Activated CD8-positive, alpha-beta T cell treated with anti-CD3 and anti-CD28 coated beads, Interleukin-2, amount 10 ng/mL, durations not matched to agents 7 days and 5 days (primary cell): ENCODE measurements at regions of chr6 and their contacts with region 1.

Region 1: DNA sequence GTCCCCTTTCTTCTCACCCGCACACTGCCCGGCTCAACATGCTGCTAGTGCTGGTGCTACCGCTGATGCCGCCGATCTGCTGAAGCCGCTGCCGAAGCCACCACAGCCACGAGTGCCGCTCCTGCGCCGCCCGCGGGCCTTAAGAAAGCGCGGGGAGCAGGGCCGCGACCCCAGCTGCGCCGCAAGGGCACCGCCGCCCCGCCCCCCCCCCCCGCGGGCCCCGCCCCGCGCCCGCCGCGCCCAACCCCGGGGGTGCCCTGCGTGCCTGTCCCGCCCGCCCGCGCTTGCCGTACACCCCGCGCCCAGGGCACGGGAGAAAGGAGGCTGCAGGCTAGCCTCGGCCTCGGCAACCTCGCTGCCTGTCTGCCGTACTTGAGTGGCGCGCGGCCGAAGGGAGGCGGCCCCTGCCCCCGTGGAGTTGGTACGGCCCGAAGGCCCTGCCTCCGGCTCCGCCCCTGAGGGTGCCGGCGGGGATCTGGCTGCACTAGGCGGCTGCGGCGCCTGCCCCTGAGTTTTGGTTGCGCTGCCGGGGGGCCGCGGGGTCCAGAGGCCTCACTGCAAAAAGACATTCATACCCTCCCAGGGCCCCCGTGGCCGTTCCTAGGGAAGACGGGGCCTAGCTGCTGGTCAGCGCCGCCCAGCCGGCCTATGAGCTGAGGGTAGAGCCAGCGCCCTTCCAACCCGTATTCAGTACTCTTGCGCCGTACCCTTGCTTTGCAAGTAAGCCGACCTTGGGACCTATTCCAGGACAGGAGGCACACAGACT is at the start of gene SOD2:
- DNase-seq: peak; percentile 85
- ATAC-seq: peak; percentile 81
- H3K4me3 Mint-ChIP-seq: peak within 1 kb of the TSS; percentile 94
- H3K27ac Mint-ChIP-seq: peak within 1 kb of the TSS; percentile 95
- H3K4me1 Mint-ChIP-seq: peaks cover 37% of the 10 kb centered on the region
- H3K27me3 Mint-ChIP-seq: no peaks in the 10 kb centered on the region
- total RNA-seq, gene SOD2: 59.1 to 66.4 TPM

Region 2: GRCh38 chr6:159665868-159666635 is 27.3 kb before region 1 on chr6:
- CTCF ChIA-PET with region 1: no interaction called
- POLR2A ChIA-PET with region 1: no interaction called
- DNase-seq: no peak
- ATAC-seq: no peak
- H3K4me3 Mint-ChIP-seq: no peak overlapping the region
- H3K27ac Mint-ChIP-seq: no peak overlapping the region
- H3K4me1 Mint-ChIP-seq: no peaks in the 10 kb centered on the region
- H3K27me3 Mint-ChIP-seq: no peaks in the 10 kb centered on the region

Region 3: DNA sequence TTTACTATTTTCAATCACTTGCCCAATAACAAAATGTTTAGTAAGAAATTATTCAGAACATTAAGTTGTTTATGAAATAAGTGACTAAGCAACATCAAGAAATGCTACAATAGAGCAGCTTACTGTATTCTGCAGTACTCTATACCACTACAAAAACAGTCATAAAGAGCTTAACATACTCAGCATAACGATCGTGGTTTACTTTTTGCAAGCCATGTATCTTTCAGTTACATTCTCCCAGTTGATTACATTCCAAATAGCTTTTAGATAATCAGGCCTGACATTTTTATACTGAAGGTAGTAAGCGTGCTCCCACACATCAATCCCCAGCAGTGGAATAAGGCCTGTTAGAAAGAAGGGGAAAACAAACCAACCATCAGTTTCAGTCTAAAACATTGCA is 11.0 kb before region 1 on chr6:
- CTCF ChIA-PET with region 1: interaction called, 10 read pairs
- POLR2A ChIA-PET with region 1: interaction called, 6 read pairs
- DNase-seq: no peak
- ATAC-seq: no peak
- H3K4me3 Mint-ChIP-seq: no peak overlapping the region
- H3K27ac Mint-ChIP-seq: no peak overlapping the region
- H3K4me1 Mint-ChIP-seq: peaks cover 19% of the 10 kb centered on the region
- H3K27me3 Mint-ChIP-seq: no peaks in the 10 kb centered on the region

Region 4: GRCh38 chr6:159726918-159727716 is 33.8 kb after region 1 on chr6 and contains the start of gene WTAP:
- CTCF ChIA-PET with region 1: interaction called, 33 read pairs
- POLR2A ChIA-PET with region 1: interaction called, 56 read pairs
- DNase-seq: peak; percentile 98
- ATAC-seq: peak; percentile 82
- H3K4me3 Mint-ChIP-seq: peak within 1 kb of the TSS; percentile 93
- H3K27ac Mint-ChIP-seq: peak within 1 kb of the TSS; percentile 98
- H3K4me1 Mint-ChIP-seq: peaks cover 51% of the 10 kb centered on the region
- H3K27me3 Mint-ChIP-seq: no peaks in the 10 kb centered on the region
- total RNA-seq, gene WTAP: 111 to 113 TPM

Region 5: GRCh38 chr6:159852877-159853276 is 159.6 kb after region 1 on chr6:
- CTCF ChIA-PET with region 1: interaction called, 13 read pairs
- POLR2A ChIA-PET with region 1: no interaction called
- DNase-seq: peak; percentile 44
- ATAC-seq: peak; percentile 57
- H3K4me3 Mint-ChIP-seq: no peak overlapping the region
- H3K27ac Mint-ChIP-seq: no peak overlapping the region
- H3K4me1 Mint-ChIP-seq: peaks cover 3% of the 10 kb centered on the region
- H3K27me3 Mint-ChIP-seq: peaks cover 19% of the 10 kb centered on the region

Region 6: DNA sequence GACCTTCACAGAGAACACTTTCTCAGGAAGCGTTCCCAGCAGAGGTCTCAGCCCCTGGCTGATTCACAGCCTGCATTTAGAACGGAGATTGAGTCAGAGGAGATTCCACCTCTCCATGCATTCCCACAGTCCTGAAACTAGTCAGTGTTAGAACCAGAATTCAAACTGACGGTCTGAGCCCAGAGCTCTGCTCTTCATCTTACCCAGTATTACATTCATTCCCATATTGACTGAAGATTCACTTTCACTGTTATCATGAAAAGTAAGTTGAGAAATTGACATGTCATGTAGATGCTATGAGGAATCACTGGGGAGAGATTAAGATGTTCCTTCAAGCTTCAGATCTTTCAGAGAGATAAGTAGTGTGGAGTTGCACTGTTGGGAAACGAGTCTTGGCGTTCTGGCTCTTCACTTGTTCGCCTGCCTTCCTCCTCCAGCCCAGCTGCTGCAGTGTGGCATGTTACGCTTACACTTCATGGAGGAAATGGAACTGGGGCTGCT is 225.8 kb after region 1 on chr6:
- CTCF ChIA-PET with region 1: no interaction called
- POLR2A ChIA-PET with region 1: no interaction called
- DNase-seq: no peak
- ATAC-seq: no peak
- H3K4me3 Mint-ChIP-seq: no peak overlapping the region
- H3K27ac Mint-ChIP-seq: no peak overlapping the region
- H3K4me1 Mint-ChIP-seq: no peaks in the 10 kb centered on the region
- H3K27me3 Mint-ChIP-seq: peaks cover 9% of the 10 kb centered on the region

Region 7: GRCh38 chr6:159968440-159969203 is 275.3 kb after region 1 on chr6 and contains the start of gene IGF2R:
- CTCF ChIA-PET with region 1: no interaction called
- POLR2A ChIA-PET with region 1: no interaction called
- DNase-seq: peak; percentile 95
- ATAC-seq: peak; percentile 89
- H3K4me3 Mint-ChIP-seq: peak within 1 kb of the TSS; percentile 92
- H3K27ac Mint-ChIP-seq: peak within 1 kb of the TSS; percentile 94
- H3K4me1 Mint-ChIP-seq: peaks cover 41% of the 10 kb centered on the region
- H3K27me3 Mint-ChIP-seq: peaks cover 17% of the 10 kb centered on the region
- total RNA-seq, gene IGF2R: 57.4 to 59.8 TPM